Right ventricle myocardium superior (tissue), 1 donor: ENCODE measurements at regions of chr1 and their contacts with region 1.

Region 1: GRCh38 chr1:214102907-214103306 is 115.1 kb downstream of the PROX1 start:
- DNase-seq: no peak
- ATAC-seq: no peak

Region 2: GRCh38 chr1:213641312-213641711 is 461.6 kb before region 1 on chr1:
- intact Hi-C with region 1: no loop called
- DNase-seq: no peak
- ATAC-seq: no peak

Region 3: DNA sequence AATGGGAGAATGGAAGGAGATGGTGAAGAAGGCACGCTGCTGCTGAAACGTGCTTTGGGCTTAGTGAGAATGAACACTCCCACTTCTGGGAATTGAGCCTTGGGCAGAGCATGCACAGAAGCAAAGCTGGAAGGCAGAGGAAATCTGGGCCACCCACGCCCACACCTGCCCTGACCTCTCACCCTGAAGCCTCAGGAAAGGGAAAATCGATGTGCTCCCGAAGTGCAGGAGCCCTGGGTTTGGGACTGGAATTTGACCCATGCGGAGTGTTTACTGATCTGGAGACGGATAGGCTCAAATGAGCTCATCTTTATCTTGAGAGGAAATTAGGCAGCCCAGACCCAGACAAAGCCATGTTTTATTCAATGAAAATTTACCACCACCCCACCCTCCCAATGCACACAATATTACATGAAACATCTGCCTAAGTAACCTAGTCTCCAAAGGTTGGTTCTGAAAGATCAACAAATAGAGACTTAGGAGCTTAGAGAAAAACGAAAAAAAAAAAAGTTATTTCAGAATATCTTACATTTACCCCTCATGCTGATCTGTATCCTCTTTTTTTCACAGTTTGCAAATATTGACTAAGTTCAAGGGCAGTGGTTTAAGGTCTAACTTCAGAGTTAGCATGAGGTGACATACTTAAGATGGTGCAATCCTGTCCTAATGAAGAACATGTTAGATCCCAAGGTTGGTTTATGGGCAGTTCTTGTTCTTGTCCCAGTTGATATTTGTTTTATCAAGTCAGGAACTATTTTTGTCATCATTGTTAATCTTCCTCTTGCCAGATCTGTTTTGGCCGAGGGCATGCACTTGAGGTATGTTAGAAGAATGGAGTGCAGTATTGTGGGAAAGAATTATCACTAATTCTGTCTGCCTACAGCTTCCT is 52.1 kb before region 1 on chr1:
- intact Hi-C with region 1: loop called (anchors 5 kb)
- DNase-seq: no peak
- ATAC-seq: peak; percentile 77